Common myeloid progenitor, CD34-positive (primary cell): ENCODE measurements at regions of chr3 and their contacts with region 1.

Region 1: DNA sequence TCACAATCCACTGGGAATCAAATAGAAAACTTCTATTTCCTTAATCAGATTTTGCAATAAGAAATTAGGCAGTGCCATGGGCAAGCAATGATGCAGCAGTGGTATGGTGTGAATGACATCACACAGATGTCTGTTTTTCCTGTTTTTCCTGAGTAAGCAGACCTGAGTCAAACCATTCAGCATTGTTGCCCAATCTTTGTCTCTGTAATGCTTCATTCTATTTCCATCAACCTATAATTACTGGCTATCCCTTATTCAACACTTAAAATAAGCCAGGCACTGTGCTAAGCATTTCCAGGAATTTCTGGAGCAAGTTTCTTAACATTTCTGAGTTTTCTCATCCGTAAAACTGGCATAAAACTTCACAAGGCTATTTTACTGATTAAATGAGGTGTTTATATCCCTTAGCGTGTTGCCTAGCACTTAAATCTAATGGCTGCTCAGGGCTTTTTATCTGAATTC is 11.3 kb upstream of the OXSR1 start:
- DNase-seq: no peak
- H3K4me3 ChIP-seq: no peak overlapping the region
- H3K27ac ChIP-seq: no peak overlapping the region
- H3K4me1 ChIP-seq: peaks cover 3 to 35% (median 17%) of the 10 kb centered on the region in 4 experiments
- H3K27me3 ChIP-seq: no peaks in the 10 kb centered on the region

Region 2: GRCh38 chr3:38136777-38137614 is 17.1 kb before region 1 on chr3 and contains the start of gene ACAA1:
- CTCF ChIA-PET with region 1: interaction called, 10 read pairs
- POLR2A ChIA-PET with region 1: interaction called, 3 read pairs
- DNase-seq: peak; percentile 98 to 99 (median 99)
- H3K4me3 ChIP-seq: peak within 1 kb of the TSS; percentile 81 to 97 (median 92)
- H3K27ac ChIP-seq: peak within 1 kb of the TSS; percentile 61 to 82
- H3K4me1 ChIP-seq: peaks cover 2 to 53% (median 45%) of the 10 kb centered on the region in 4 experiments
- H3K27me3 ChIP-seq: no peaks in the 10 kb centered on the region

Region 3: DNA sequence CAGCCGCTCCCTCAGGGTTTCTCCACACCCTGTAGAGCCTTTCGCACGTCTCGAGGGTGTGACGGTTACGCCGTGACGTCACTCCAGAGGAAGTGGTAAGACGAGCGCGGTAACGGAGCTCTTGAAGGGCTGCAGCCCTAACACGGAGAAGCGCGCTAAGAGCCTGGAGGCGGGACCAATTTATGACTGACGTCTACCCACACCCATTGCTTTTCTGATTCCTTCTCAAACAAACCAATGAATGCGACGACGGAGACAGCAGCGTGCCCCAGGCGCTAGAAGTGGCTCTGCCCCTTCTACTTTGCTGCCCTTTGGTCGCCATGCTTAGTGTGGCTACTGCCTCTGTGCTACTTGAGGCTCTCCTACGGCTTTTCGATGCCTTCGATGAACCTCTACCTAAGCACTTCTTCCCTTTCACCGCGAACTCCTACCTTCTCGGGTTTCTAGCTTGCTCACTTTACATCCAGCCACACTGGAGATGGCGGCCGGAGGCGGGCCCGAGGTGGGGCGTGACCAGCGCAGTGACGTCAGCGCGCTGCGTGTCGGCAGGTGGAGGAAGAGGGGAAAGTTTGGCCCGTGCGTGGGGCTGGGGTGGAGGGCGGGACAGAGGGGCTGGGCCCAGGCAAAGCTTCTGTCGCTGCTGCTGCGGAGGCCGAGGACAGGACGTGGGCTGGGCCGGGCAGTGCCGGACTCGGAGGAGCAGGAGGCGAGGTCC is 11.1 kb after region 1 on chr3 and contains the start of gene OXSR1:
- CTCF ChIA-PET with region 1: interaction called, 13 read pairs
- POLR2A ChIA-PET with region 1: interaction called, 9 read pairs
- DNase-seq: peak; percentile 100
- H3K4me3 ChIP-seq: peak within 1 kb of the TSS; percentile 71 to 91 (median 83)
- H3K27ac ChIP-seq: peak within 1 kb of the TSS; percentile 99 to 100
- H3K4me1 ChIP-seq: peaks cover 9 to 24% (median 20%) of the 10 kb centered on the region in 4 experiments
- H3K27me3 ChIP-seq: no peaks in the 10 kb centered on the region

Region 4: GRCh38 chr3:38205472-38205805 is 51.4 kb after region 1 on chr3:
- CTCF ChIA-PET with region 1: no interaction called
- POLR2A ChIA-PET with region 1: no interaction called
- DNase-seq: peak in 2 of 3 donors; percentile 38 to 48
- H3K4me3 ChIP-seq: no peak overlapping the region
- H3K27ac ChIP-seq: no peak overlapping the region
- H3K4me1 ChIP-seq: peaks cover 0 to 10% (median 2%) of the 10 kb centered on the region in 4 experiments
- H3K27me3 ChIP-seq: no peaks in the 10 kb centered on the region